Heart left ventricle (tissue), 16 donors: ENCODE measurements at regions of chr1 and their contacts with region 1.

Region 1: DNA sequence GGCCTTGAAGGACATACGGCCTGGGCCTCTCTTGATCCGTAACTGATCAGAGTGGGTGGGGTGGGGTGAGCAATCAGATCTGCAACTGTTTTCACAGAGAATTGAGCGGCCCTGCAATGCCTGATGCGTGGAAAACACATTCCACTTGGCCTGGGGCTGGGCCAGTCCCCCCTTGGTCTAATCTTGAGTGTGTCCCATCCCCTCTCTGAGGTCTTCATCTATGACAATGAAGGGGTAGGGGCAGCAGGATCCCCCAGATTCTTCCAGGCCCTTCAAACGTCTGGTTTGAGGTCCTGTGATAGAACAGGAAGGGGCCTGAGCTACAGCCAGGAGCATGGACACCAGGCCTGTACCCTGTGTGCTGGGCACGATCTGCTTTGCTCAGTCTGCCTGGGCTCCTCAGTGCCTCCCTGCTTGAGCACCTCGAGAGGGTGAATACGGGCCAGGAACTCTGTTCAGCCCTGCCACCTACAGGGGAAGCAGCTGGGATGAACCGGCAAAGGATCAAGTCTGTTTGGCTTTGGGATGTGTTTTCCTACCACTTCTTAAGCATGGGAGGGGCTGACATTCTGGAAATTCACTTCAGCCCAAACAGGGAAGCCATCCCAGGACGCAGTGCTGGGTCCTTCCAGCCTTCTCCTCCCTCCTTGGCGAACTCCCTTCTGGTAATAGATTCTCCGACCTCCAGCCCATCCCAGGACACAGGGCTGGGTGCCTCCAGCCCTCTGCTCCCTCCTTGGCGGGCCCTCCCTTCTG is 56.0 kb upstream of the SELENON start:
- DNase-seq: peak; percentile 76 to 88 (median 79)
- ATAC-seq: peak; percentile 86 to 91 (median 88)
- H3K4me3 ChIP-seq: no peak overlapping the region
- H3K27ac ChIP-seq: peak overlapping the region; percentile 81 to 99 (median 92)
- H3K4me1 ChIP-seq: peaks cover 0 to 39% (median 28%) of the 10 kb centered on the region in 12 donors
- H3K27me3 ChIP-seq: no peaks in the 10 kb centered on the region
- CTCF ChIP-seq: peak; percentile 27 to 73 (median 53)
- POLR2A ChIP-seq: no peak

Region 2: DNA sequence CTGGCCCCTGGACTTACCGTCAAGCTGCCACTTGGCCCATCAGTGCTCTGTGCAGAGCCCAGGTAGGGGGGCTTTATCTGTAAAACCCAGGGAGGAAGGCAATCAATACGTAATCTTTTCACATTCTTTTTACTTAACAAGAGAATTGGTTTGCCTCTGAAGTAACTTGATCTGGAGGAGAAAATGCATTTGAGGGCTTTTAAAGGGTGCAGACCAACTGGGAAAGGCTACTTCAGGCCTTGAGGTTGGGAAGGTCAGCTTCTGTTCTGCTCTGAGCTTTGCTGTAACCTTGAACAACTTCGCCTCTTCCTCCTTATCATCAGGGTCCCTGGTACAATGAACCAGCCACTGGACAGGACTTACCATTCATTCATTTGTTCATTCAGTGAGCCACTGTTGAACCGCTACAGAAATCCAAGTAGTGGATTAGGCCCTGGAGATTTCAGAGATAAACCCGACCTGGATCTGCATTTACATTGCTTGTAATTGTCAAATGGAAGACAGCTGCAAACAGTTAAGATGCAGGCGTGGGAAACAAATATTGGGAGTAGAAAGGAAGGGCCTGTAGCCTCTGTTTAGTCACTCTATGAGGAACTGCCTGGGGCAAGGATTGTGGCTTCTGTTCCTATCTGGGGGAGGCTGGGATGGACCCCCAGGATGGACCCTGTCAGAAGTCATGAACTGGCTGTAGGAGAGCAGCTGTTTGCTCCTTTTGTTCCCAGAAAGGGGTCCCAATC is 36.6 kb before region 1 on chr1:
- intact Hi-C with region 1: loop called in 2 of 10 experiments (anchors 5 kb)
- DNase-seq: no peak
- ATAC-seq: peak in 1 of 4 donors; percentile 19
- H3K4me3 ChIP-seq: no peak overlapping the region
- H3K27ac ChIP-seq: peak overlapping the region in 8 of 12 donors; percentile 0 to 79 (median 39)
- H3K4me1 ChIP-seq: peaks cover 0 to 80% (median 58%) of the 10 kb centered on the region in 12 donors
- H3K27me3 ChIP-seq: no peaks in the 10 kb centered on the region
- CTCF ChIP-seq: no peak
- POLR2A ChIP-seq: no peak

Region 3: DNA sequence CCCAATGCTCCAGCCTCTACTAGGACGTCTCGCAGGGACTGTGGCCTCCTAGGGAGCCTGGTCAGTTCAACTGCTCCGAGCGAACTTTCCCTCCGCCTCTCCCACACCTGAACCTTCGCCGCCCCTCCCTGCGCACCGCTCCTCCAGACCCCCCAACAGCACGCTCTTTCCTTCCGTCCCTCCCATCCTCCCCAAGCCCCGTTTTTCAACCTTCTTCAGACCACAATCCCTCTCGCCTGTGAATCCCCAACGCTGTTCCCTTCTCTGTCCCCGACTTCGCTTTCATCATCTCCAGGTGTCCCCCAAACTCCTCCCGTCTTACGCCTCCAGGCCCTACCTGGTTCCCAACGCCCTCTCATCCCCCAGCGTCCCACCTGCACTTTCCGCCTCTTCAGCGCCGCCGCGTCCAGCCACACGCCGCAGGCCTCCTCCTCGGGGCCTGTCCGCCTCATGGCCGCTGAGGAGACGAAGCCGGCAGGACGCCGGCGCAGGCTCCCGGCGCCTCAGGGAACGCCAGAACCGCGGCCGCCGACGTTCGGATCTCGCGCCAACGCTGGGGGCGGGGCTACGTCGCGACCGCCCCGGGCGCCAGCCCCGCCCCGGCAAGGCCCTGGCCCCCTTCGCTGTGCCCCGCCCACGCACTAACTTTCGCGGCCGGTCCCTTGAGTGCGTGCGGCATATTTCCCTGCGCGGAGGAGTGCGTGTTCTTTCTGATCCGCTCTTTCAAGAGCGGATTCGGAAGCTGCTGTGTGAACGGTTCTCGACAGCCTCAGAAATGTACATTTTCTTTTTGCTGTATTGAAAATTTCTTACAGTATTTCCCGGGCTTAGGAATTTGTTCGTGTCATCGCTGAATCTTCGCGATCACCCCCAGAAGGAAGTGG is 115.1 kb after region 1 on chr1 and contains the start of gene AUNIP:
- intact Hi-C with region 1: no loop called
- DNase-seq: peak; percentile 89 to 92 (median 90)
- ATAC-seq: peak; percentile 91 to 98 (median 98)
- H3K4me3 ChIP-seq: peak within 1 kb of the TSS; percentile 3 to 68 (median 54)
- H3K27ac ChIP-seq: peak within 1 kb of the TSS in 11 of 12 donors; percentile 29 to 90 (median 68)
- H3K4me1 ChIP-seq: peaks cover 0 to 32% (median 8%) of the 10 kb centered on the region in 12 donors
- H3K27me3 ChIP-seq: no peaks in the 10 kb centered on the region
- CTCF ChIP-seq: no peak
- POLR2A ChIP-seq: peak in 1 of 2 donors; percentile 60
- total RNA-seq, gene AUNIP: 0.25 to 1.5 (median 0.27) TPM in 3 of 9 donors, not detected in the others